Activated T-helper 1 cell treated with anti-CD3 and anti-CD28 coated beads, Interleukin-12 subunit alpha, Interleukin-12 subunit beta, Interleukin-2, Interleukin-4 antibody, amounts not matched to agents 30 ng/mL and 10 ng/mL and 1 ng/mL, durations not matched to agents 14 hours and 24 hours and 36 hours (primary cell): ENCODE measurements at regions of chr14 and their contacts with region 1.

Region 1: DNA sequence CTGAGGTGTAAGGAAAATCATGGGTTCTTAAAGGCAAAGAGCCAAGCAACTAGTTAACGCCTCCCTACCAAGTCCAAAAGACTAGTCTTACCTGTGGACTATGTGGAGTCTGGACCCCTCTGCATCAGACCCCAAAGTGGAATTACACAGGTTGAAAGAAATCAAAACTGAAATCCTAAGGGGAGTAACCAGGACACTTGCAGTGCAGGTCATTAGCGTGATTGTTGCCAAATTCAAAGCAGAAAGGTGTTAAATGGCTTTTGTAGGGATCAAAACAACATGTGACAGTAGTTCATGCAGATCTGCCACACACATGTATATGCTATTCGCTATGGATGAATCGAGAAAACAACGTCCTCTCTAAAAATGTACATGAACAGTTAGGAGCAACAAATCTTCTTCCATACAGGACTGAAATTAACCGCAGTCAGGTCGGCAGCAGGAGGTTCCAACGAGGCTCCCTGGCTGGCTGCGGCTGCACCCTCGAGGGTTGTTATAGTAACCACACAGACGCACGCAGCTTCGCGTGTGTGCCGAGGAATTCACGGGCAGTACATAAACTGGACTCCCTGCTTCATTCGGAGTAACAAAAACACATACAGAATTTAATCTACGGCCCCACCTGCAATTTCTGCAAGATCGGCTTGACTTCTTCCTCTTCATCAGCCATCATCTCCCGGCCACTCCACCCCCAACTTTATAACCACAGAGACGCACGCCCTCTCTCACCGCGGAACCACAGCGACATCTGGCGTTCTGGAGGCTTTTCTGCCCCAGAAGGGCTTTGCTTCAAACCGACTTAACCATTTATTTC is at the start of gene TTC5:
- DNase-seq: peak; percentile 85
- H3K4me3 Mint-ChIP-seq: peak within 1 kb of the TSS; percentile 96
- H3K27ac Mint-ChIP-seq: peak within 1 kb of the TSS; percentile 94
- H3K4me1 Mint-ChIP-seq: peaks cover 25% of the 10 kb centered on the region
- H3K27me3 Mint-ChIP-seq: no peaks in the 10 kb centered on the region
- total RNA-seq, gene TTC5: 33.0 and 33.7 TPM in 2 replicates

Region 2: DNA sequence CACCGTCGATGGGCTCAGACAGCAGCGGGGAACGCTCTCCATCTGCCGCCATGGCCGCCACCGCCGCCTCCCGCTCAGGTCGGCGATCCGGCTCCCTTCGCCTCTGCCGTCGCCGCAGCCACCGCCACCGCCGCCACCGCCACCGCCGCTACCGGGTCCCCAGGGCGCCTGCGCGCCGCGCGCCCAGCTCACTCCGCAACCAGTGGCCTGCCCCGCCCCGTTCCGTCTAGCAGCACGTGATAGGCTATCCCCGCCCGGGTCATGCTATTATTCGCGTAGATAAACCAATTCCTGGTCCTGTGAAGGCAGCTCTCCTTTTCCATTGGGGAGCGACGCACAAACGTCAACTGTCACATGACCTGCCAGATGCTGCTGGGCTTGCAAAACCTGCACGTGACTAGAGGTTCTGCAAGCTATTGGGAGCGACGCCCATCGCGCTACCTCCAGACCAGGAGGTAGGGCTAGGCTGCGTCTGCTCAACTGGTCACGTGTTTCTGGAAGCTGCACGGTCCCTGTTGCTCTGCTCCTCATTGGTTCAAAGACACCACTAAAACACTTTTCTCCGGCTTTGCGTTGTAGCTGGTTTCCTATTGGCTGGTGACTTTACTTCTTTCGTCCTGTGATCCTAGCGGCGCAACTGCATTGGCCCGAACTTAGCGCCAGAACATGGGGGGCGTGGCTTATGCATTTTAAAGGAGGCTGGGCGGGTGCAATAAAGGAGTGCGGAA is 156.0 kb after region 1 on chr14 and contains the start of gene PIP4P1:
- intact Hi-C with region 1: loop called (anchors 1 kb)
- DNase-seq: peak; percentile 99
- H3K4me3 Mint-ChIP-seq: peak within 1 kb of the TSS; percentile 94
- H3K27ac Mint-ChIP-seq: peak within 1 kb of the TSS; percentile 87
- H3K4me1 Mint-ChIP-seq: peaks cover 23% of the 10 kb centered on the region
- H3K27me3 Mint-ChIP-seq: no peaks in the 10 kb centered on the region
- total RNA-seq, gene PIP4P1: 36.6 and 37.0 TPM in 2 replicates